IMR-90 (cell line): ENCODE measurements at regions of chr4 and their contacts with region 1.

Region 1: GRCh38 chr4:23590431-23590830 is 299.4 kb downstream of the PPARGC1A start:
- DNase-seq: no peak
- ATAC-seq: no peak
- H3K4me3 ChIP-seq: no peak overlapping the region
- H3K27ac ChIP-seq: no peak overlapping the region
- H3K4me1 ChIP-seq: no peaks in the 10 kb centered on the region
- H3K27me3 ChIP-seq: no peaks in the 10 kb centered on the region
- CTCF ChIP-seq: no peak
- POLR2A ChIP-seq: no peak
- RAD21 ChIP-seq: no peak

Region 2: DNA sequence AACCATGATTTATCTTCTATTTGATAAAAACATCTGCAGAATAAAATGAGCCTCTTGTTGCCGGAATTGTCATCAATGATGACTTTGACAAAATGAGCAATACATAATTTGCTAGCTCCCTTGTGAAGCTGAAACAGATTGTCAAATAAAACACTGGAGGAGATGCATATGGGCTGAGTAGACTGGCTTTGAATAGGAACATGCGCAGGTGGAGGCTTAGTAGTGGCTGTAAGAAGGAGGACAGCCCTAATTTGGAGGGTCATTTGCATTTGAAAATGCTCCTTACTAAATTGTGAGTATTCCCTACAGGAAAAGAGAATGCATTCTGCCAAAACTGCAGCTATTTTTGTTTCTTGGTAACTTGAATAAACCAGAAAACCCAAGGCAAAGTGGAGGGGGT is 29.7 kb before region 1 on chr4:
- CTCF ChIA-PET with region 1: no interaction called
- POLR2A ChIA-PET with region 1: no interaction called
- dilution Hi-C with region 1: no loop called
- in situ Hi-C with region 1: no loop called
- intact Hi-C with region 1: loop called (anchors 1 kb)
- DNase-seq: no peak
- ATAC-seq: no peak
- H3K4me3 ChIP-seq: no peak overlapping the region
- H3K27ac ChIP-seq: no peak overlapping the region
- H3K4me1 ChIP-seq: no peaks in the 10 kb centered on the region
- H3K27me3 ChIP-seq: no peaks in the 10 kb centered on the region
- CTCF ChIP-seq: no peak
- POLR2A ChIP-seq: no peak
- RAD21 ChIP-seq: no peak

Region 3: DNA sequence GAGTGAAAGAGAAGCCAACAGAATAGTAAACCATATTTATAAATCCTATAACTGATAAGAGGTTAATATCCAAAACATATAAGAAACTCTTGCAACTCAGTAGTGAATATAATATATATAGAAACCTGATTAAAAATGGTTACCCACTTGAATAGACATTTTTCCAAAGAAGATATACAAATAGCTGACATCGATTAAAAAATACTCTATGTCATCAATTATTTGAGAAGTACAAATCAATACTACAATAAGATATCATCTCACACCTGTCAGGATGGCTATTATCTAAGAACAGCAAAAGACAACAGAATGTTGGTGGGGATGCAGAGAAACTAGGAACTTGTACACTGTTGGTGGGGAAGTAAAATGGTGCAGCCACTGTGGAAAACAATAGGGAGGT is 45.0 kb after region 1 on chr4:
- CTCF ChIA-PET with region 1: no interaction called
- POLR2A ChIA-PET with region 1: no interaction called
- dilution Hi-C with region 1: no loop called
- in situ Hi-C with region 1: no loop called
- intact Hi-C with region 1: no loop called
- DNase-seq: no peak
- ATAC-seq: no peak
- H3K4me3 ChIP-seq: no peak overlapping the region
- H3K27ac ChIP-seq: no peak overlapping the region
- H3K4me1 ChIP-seq: no peaks in the 10 kb centered on the region
- H3K27me3 ChIP-seq: no peaks in the 10 kb centered on the region
- CTCF ChIP-seq: no peak
- POLR2A ChIP-seq: no peak
- RAD21 ChIP-seq: no peak

Region 4: GRCh38 chr4:24260133-24260715 is 669.8 kb after region 1 on chr4:
- CTCF ChIA-PET with region 1: no interaction called
- POLR2A ChIA-PET with region 1: no interaction called
- dilution Hi-C with region 1: no loop called
- in situ Hi-C with region 1: no loop called
- intact Hi-C with region 1: no loop called
- DNase-seq: no peak
- ATAC-seq: no peak
- H3K4me3 ChIP-seq: no peak overlapping the region
- H3K27ac ChIP-seq: no peak overlapping the region
- H3K4me1 ChIP-seq: no peaks in the 10 kb centered on the region
- H3K27me3 ChIP-seq: peaks cover 3% of the 10 kb centered on the region; the same call in 1 of the 2 replicates
- CTCF ChIP-seq: no peak
- POLR2A ChIP-seq: no peak
- RAD21 ChIP-seq: no peak